ENCODE measurements at regions of chr1 and their contacts with region 1.

Region 1: GRCh38 chr1:212782422-212783154 is 9.0 kb downstream of the NSL1 start:
- DNase-seq: peak; percentile 58
- H3K4me3 Mint-ChIP-seq: no peak overlapping the region
- H3K27ac Mint-ChIP-seq: peak overlapping the region; percentile 57
- H3K4me1 Mint-ChIP-seq: peaks cover 7% of the 10 kb centered on the region
- H3K27me3 Mint-ChIP-seq: no peaks in the 10 kb centered on the region
- CTCF ChIP-seq: peak; percentile 84

Region 2: GRCh38 chr1:212518188-212519054 is 264.2 kb before region 1 on chr1:
- CTCF ChIA-PET with region 1: no interaction called
- POLR2A ChIA-PET with region 1: no interaction called
- intact Hi-C with region 1: no loop called
- DNase-seq: peak; percentile 70
- H3K4me3 Mint-ChIP-seq: no peak overlapping the region
- H3K27ac Mint-ChIP-seq: no peak overlapping the region
- H3K4me1 Mint-ChIP-seq: no peaks in the 10 kb centered on the region
- H3K27me3 Mint-ChIP-seq: peaks cover 12% of the 10 kb centered on the region
- CTCF ChIP-seq: no peak

Region 3: GRCh38 chr1:212595787-212596714 is 186.5 kb before region 1 on chr1:
- CTCF ChIA-PET with region 1: interaction called, 11 read pairs
- POLR2A ChIA-PET with region 1: interaction called, 6 read pairs
- intact Hi-C with region 1: no loop called
- DNase-seq: peak; percentile 97
- H3K4me3 Mint-ChIP-seq: peak overlapping the region; percentile 69
- H3K27ac Mint-ChIP-seq: peak overlapping the region; percentile 100
- H3K4me1 Mint-ChIP-seq: peaks cover 27% of the 10 kb centered on the region
- H3K27me3 Mint-ChIP-seq: peaks cover 30% of the 10 kb centered on the region
- CTCF ChIP-seq: peak; percentile 97

Region 4: GRCh38 chr1:212699104-212699624 is 83.4 kb before region 1 on chr1:
- CTCF ChIA-PET with region 1: interaction called, 3 read pairs
- POLR2A ChIA-PET with region 1: interaction called, 3 read pairs
- intact Hi-C with region 1: loop called (anchors 1 kb)
- DNase-seq: peak; percentile 59
- H3K4me3 Mint-ChIP-seq: peak overlapping the region; percentile 71
- H3K27ac Mint-ChIP-seq: no peak overlapping the region
- H3K4me1 Mint-ChIP-seq: peaks cover 12% of the 10 kb centered on the region
- H3K27me3 Mint-ChIP-seq: peaks cover 62% of the 10 kb centered on the region
- CTCF ChIP-seq: peak; percentile 91

Region 5: GRCh38 chr1:212749821-212750535 is 32.6 kb before region 1 on chr1:
- CTCF ChIA-PET with region 1: interaction called, 23 read pairs
- POLR2A ChIA-PET with region 1: interaction called, 3 read pairs
- intact Hi-C with region 1: no loop called
- DNase-seq: peak; percentile 90
- H3K4me3 Mint-ChIP-seq: peak overlapping the region; percentile 7
- H3K27ac Mint-ChIP-seq: peak overlapping the region; percentile 46
- H3K4me1 Mint-ChIP-seq: peaks cover 19% of the 10 kb centered on the region
- H3K27me3 Mint-ChIP-seq: no peaks in the 10 kb centered on the region
- CTCF ChIP-seq: peak; percentile 96

Measured in MCF 10A (cell line).